AG04449 (cell line): ENCODE measurements at regions of chr1 and their contacts with region 1.

Region 1: GRCh38 chr1:1059494-1060280 is 14.4 kb downstream of the RNF223 start:
- DNase-seq: no peak
- H3K4me3 ChIP-seq: peak overlapping the region; percentile 56
- CTCF ChIP-seq: no peak

Region 2: GRCh38 chr1:983799-984473 is 75.8 kb before region 1 on chr1:
- CTCF ChIA-PET with region 1: interaction called, 152 read pairs
- POLR2A ChIA-PET with region 1: no interaction called
- DNase-seq: no peak
- H3K4me3 ChIP-seq: peak overlapping the region; percentile 40
- CTCF ChIP-seq: peak; percentile 91

Region 3: DNA sequence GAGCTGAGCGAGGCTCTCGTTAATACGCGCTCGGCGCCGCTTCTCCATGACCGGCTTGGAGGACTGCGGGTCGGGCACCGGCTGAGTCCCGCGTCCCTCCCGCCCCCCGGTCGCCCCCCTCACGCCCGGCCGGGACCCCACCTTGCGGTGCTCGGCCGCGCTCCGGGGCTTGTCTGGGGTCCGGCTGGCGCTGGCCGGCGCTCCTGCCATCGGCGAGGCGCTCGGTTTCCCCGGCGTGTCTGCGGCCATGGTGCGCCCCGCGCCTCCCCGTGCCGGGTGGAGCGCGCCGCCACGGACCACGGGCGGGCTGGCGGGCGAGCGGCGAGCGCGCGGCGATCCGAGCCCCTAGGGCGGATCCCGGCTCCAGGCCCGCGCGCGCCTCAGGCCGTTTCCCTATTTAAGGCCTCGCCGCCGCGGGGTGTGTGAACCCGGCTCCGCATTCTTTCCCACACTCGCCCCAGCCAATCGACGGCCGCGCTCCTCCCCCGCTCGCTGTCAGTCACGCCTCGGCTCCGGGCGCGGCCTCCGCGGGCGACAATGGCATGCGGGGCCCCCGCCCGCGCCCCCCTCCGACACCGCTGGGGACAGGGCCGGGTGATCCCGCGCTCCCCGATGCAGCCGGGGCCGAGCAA is 59.8 kb before region 1 on chr1 and contains the start of gene HES4:
- CTCF ChIA-PET with region 1: interaction called, 11 read pairs
- POLR2A ChIA-PET with region 1: no interaction called
- DNase-seq: peak; percentile 51
- H3K4me3 ChIP-seq: peak within 1 kb of the TSS; percentile 73
- CTCF ChIP-seq: no peak

Region 4: GRCh38 chr1:1013105-1013921 is 46.4 kb before region 1 on chr1 and contains the start of gene ISG15:
- CTCF ChIA-PET with region 1: interaction called, 10 read pairs
- POLR2A ChIA-PET with region 1: no interaction called
- DNase-seq: peak; percentile 51
- H3K4me3 ChIP-seq: peak within 1 kb of the TSS; percentile 69
- CTCF ChIP-seq: no peak

Region 5: DNA sequence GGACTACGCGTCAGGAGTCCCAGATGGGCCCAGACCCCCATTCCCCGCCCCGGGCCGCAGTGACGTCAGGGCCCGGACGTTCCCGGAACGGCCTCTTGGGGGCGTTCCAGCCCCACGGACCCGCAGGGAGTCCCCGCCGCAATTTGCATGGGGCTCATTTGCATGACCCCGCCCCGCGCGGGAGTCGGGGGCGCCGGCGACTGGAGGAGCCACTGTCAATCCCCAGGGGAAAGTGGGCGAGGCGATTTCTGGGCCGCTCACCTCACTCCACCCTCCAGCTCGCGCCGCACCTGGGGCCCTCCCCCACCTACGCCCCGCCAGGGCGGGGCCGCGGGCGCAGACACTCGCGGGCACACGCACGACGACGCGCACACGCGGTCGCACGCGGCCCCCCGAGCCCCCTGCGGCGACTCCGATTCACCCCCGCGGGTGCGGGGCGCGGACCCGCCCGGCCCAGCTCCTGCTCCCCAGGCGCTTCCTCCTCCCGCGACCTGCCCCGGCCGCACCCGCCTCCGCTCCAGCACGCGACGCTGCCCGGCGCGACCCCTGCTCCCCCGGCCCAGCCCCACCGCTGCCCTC is 26.6 kb before region 1 on chr1:
- CTCF ChIA-PET with region 1: interaction called, 10 read pairs
- POLR2A ChIA-PET with region 1: no interaction called
- DNase-seq: no peak
- H3K4me3 ChIP-seq: peak overlapping the region; percentile 29
- CTCF ChIP-seq: peak; percentile 82

Region 6: DNA sequence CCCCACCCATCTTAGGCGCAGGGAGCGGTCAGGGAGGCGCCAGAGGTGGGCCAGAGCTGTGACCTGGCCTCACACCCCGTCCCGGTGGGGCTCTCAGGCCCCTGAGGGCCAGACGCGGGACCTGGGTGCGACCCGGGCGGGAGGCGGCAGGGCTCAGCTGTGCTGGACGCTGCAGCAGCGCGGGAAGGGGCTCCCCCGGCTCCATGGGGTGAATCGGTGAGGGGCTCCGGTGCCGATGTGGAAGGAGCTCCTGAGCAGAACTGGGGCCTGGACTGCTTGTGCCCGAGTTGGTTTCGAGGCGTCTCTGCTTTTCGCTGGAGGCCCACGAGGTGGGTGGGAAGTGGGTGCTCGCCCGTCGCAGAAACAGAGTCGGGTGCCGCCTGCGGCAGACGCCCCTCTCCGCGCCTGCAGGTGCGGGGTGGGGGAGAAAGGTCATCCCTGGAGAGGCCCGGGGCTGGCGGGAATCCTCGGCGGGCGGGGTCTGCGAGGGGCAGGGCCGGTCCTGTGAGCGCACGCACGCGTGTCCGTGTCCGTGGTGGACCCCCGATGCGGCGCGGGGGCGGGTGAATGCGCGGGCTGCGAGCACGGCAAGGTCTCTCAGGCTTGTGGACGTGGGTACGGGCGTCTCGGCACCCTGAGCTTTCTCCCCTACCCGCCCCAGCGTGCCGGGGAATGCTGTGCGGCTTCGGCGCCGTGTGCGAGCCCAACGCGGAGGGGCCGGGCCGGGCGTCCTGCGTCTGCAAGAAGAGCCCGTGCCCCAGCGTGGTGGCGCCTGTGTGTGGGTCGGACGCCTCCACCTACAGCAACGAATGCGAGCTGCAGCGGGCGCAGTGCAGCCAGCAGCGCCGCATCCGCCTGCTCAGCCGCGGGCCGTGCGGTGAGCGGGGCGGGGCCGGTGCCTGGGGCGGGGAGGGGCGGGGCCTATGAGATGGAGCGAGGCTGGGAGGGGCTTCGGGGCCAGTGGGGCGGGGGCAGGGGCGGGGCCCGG is 19.4 kb before region 1 on chr1:
- CTCF ChIA-PET with region 1: interaction called, 12 read pairs
- POLR2A ChIA-PET with region 1: no interaction called
- DNase-seq: no peak
- H3K4me3 ChIP-seq: peak overlapping the region; percentile 44
- CTCF ChIP-seq: peak; percentile 48

Region 7: DNA sequence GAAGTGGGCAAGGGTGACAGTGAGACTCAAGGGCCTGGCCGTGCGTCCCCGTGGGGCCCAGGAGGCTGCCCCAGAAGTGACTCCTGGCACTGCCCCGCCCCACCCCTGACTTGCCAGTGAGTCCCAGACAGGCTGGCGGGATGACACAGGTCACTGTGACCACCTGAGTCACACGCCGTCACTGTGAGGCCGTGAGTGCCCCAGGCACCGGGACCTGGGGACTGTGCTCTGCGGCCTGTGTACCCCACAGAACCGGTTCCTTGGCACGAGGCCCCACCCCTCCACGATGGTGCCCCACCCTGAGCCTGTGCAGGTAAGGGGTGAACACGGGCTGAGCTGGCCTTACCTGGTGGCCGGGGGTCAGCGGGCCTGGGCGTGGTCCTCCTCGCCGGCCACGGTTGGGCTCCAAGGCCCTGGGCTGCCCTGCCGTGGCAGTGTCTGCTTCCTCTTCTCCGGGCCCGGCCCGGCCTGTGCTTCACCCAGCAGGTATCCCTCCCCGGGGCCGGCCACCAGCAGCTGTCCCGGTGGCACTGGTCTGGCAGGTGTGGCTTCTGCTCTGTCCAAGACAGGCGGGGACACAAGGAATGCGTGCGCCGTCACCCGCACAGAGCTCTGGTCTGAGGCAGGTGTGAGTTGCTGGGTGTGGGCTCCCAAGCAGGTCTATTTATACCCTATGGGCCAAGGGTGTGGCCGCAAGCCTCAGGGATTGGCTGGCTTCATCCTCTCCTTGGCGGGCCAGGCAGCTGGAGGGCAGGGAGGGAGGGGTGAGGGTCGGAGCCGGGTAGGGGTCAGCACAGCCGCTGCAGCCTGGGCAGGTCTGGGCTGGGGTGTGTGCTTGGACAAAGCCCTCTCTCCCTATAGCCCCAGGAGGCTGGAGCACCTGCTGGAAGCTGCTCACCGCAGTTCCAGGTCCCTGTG is 14.2 kb after region 1 on chr1 and contains the start of gene RNF223:
- CTCF ChIA-PET with region 1: interaction called, 12 read pairs
- POLR2A ChIA-PET with region 1: no interaction called
- DNase-seq: no peak
- H3K4me3 ChIP-seq: no peak within 1 kb of the TSS
- CTCF ChIP-seq: no peak